SK-MEL-5 (cell line): ENCODE measurements at regions of chr15 and their contacts with region 1.

Region 1: GRCh38 chr15:65638681-65639089 is 16.9 kb downstream of the SLC24A1 start:
- DNase-seq: peak; percentile 87

Region 2: GRCh38 chr15:65451989-65452388 is 186.7 kb before region 1 on chr15:
- in situ Hi-C with region 1: no loop called
- DNase-seq: no peak

Region 3: DNA sequence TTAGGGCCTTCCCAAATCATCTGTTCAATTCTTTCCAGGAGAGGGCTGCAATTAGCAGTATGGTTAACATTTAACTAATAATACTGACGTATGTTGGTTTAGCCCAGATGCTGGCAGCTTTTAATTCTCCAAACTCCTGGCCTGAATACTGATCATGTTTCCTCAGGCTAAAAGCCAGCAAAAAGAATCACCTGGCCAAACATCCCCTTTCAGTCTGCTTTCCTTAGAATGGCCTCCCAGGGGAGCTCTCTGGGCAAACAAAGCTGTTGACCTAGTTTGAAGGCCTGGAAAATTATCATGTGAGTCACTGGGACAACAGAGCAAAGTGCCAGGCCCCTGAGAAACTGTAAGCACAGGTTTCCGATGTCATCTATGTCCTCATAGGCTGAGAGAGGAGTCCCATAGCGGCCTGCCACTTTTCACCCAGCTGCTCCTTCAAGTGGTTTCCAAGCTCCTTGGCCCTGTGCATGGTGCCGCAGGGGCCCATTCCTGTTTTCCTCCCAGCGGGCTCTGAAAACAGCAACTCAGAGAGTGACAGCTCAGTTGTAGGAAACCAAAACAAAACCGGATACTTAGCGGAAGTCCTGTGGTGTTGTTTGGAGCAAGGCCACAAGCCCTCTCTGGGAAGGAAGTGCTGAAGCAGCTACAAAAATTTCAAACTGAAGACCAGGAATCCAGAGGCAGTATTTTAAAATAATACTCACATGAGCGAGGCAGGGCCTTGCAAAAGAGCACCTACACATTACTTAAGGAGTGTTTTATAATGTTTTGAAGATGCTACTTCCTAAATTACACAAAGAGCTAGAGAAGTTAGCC is 194.1 kb after region 1 on chr15:
- in situ Hi-C with region 1: loop called (anchors 25 kb)
- DNase-seq: peak; percentile 26